GM18951 (cell line): ENCODE measurements at regions of chr17 and their contacts with region 1.

Region 1: DNA sequence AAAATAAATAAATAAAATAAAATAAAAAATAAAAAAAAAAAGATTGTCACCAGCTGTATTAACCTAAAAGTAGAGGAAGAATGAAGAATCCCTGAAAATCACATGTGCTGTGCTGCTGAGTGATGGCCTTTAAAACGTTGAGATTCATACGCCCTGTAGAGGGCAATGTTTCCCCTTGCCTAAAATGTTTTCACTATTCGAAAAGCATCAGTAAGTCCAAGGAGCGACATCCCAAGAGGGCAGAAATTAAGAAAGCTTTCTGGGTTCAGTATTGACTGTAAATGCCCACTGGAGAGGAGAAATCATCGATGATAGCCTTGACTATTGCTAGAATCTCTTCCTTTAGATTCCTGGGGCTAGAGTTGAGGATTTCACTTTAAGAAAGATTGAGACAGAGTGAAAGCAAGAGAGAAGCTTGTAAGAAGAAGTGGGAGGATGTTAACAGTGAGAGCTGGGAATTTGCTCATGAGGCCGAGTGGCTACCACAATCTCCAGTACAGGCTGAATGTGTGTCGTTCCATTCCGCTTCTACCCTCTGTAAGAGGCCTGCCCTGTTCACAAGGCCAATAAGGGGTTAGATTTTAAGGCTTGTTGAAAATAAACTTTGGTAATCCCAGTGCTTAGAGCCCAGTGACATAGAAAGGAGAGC is 170.8 kb upstream of the FAM20A start:
- POLR2A ChIP-seq: no peak

Region 2: GRCh38 chr17:68468334-68468733 is 303.7 kb before region 1 on chr17:
- in situ Hi-C with region 1: no loop called
- POLR2A ChIP-seq: no peak

Region 3: GRCh38 chr17:68539548-68540467 is 232.2 kb before region 1 on chr17:
- in situ Hi-C with region 1: no loop called
- POLR2A ChIP-seq: no peak

Region 4: GRCh38 chr17:68868708-68869107 is 96.7 kb after region 1 on chr17:
- in situ Hi-C with region 1: no loop called
- POLR2A ChIP-seq: no peak

Region 5: GRCh38 chr17:68910251-68910705 is 138.3 kb after region 1 on chr17:
- in situ Hi-C with region 1: loop called (anchors 10 kb)
- POLR2A ChIP-seq: no peak

Region 6: GRCh38 chr17:68972119-68972704 is 200.2 kb after region 1 on chr17:
- in situ Hi-C with region 1: loop called (anchors 10 kb)
- POLR2A ChIP-seq: no peak